Activated CD4-positive, alpha-beta T cell treated with anti-CD3 and anti-CD28 coated beads, Interleukin-2, amount 10 ng/mL, durations not matched to agents 24 days and 14 days (primary cell): ENCODE measurements at regions of chr21 and their contacts with region 1.

Region 1: DNA sequence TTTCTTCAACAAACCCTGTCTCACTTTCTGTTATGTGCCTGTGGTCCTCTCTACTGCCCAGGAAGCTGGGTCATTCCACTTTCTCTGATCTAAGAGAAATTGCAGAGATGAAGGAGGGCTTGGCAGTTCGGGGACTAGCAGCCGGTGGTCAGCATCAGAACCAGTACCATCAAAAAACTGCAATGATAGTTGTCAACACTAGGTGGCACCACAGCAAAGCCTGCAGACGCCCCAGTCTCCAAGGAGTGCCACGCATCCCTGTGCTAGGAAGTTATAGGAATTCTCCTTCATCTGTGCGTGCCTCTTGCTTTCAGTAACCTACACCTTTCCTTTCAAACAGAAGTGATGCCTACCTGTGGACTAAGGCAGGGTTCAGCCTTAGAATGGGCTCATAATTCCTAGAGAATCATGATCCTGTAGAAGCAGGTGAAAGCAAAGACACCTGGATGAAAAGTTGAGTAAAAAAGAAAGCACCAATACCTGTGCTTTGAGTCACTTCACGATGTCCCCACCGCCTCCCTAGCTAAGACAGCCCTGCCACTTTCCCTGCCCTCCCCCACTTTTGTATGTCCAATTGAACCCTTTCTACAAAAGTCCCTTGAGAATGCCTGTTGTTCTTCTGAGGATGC is 129.2 kb downstream of the ADAMTS1 start:
- DNase-seq: peak; percentile 75
- H3K4me3 Mint-ChIP-seq: no peak overlapping the region
- H3K27ac Mint-ChIP-seq: no peak overlapping the region
- H3K4me1 Mint-ChIP-seq: no peaks in the 10 kb centered on the region
- H3K27me3 Mint-ChIP-seq: no peaks in the 10 kb centered on the region

Region 2: DNA sequence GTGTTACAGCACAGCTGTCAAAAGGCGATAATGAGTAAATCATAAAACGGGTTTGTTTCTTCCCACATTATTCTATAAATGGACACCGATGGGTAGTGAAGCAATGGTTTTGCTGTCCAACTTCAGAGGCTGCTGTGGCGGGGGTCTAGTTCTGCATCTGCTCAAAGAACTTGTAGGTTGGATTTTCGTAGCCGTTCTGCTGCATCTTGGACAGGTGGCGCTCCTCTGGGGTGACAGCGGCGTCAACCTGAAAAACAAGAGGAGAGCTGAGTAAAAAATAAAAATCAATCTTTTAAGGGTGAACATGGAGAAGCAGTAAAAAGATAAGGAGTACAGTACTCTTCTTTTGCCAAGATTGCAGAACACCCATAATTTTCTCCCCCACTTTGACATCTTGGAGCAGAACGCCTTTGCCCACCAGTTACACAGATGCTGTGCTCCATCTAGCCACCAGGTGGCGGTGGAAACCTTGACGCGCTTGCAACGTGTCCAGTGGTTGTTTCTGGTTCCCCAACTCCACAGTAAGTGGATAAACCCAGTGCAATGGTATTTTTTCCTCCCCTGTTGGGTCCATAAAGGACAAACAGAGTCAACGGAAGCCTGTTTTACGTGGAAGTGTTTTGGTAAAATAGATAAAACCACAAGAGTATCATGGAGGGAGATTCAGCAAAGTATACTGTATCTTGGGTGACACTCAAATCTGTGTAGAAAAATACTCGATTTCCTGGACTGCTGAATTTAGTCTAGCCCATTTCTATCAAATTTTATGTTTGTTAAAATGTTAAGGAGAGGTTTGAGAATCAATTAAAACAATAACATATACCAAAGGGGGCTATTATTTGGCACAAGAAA is 834.2 kb before region 1 on chr21:
- intact Hi-C with region 1: loop called (anchors 2 kb)
- DNase-seq: peak; percentile 90
- H3K4me3 Mint-ChIP-seq: no peak overlapping the region
- H3K27ac Mint-ChIP-seq: no peak overlapping the region
- H3K4me1 Mint-ChIP-seq: no peaks in the 10 kb centered on the region
- H3K27me3 Mint-ChIP-seq: no peaks in the 10 kb centered on the region

Region 3: GRCh38 chr21:25895565-25896205 is 820.3 kb before region 1 on chr21:
- intact Hi-C with region 1: loop called (anchors 5 kb)
- DNase-seq: peak; percentile 65
- H3K4me3 Mint-ChIP-seq: no peak overlapping the region
- H3K27ac Mint-ChIP-seq: no peak overlapping the region
- H3K4me1 Mint-ChIP-seq: peaks cover 5% of the 10 kb centered on the region
- H3K27me3 Mint-ChIP-seq: no peaks in the 10 kb centered on the region

Region 4: GRCh38 chr21:26641062-26641461 is 74.9 kb before region 1 on chr21:
- intact Hi-C with region 1: no loop called
- DNase-seq: no peak
- H3K4me3 Mint-ChIP-seq: no peak overlapping the region
- H3K27ac Mint-ChIP-seq: no peak overlapping the region
- H3K4me1 Mint-ChIP-seq: no peaks in the 10 kb centered on the region
- H3K27me3 Mint-ChIP-seq: no peaks in the 10 kb centered on the region

Region 5: DNA sequence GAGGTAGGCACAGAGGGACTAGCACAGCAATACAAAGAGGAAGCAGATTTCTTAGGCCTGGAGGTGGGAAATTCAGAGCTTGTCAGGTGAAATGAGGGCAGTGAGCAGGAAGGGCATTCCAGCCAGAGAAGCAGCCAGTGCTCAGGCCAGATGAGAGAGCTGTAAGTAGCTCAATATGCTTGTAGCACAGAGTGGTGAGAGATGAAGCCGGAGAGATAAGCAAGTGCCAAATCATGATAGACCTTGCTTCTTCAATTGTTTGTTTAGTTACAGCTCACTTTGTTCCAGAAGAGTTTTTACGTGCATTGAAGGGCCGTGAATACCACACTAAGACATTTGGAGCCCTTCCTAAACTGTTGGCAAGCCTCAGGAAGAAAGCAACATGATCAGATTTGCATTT is 171.3 kb after region 1 on chr21:
- intact Hi-C with region 1: no loop called
- DNase-seq: no peak
- H3K4me3 Mint-ChIP-seq: no peak overlapping the region
- H3K27ac Mint-ChIP-seq: no peak overlapping the region
- H3K4me1 Mint-ChIP-seq: no peaks in the 10 kb centered on the region
- H3K27me3 Mint-ChIP-seq: no peaks in the 10 kb centered on the region